Stomach (tissue), 19 donors: ENCODE measurements at regions of chr18 and their contacts with region 1.

Region 1: GRCh38 chr18:7272311-7273049 is 41.6 kb downstream of the LRRC30 start:
- DNase-seq: peak; percentile 60 to 90
- H3K4me3 ChIP-seq: peak overlapping the region; percentile 7 to 30 (median 26)
- H3K27ac ChIP-seq: peak overlapping the region in 4 of 5 donors; percentile 47 to 65 (median 60)
- H3K4me1 ChIP-seq: peaks cover 3 to 19% (median 12%) of the 10 kb centered on the region in 4 donors
- H3K27me3 ChIP-seq: no peaks in the 10 kb centered on the region
- CTCF ChIP-seq: peak in 4 of 7 experiments; percentile 16 to 54 (median 32)
- EP300 ChIP-seq: no peak
- POLR2A ChIP-seq: no peak

Region 2: DNA sequence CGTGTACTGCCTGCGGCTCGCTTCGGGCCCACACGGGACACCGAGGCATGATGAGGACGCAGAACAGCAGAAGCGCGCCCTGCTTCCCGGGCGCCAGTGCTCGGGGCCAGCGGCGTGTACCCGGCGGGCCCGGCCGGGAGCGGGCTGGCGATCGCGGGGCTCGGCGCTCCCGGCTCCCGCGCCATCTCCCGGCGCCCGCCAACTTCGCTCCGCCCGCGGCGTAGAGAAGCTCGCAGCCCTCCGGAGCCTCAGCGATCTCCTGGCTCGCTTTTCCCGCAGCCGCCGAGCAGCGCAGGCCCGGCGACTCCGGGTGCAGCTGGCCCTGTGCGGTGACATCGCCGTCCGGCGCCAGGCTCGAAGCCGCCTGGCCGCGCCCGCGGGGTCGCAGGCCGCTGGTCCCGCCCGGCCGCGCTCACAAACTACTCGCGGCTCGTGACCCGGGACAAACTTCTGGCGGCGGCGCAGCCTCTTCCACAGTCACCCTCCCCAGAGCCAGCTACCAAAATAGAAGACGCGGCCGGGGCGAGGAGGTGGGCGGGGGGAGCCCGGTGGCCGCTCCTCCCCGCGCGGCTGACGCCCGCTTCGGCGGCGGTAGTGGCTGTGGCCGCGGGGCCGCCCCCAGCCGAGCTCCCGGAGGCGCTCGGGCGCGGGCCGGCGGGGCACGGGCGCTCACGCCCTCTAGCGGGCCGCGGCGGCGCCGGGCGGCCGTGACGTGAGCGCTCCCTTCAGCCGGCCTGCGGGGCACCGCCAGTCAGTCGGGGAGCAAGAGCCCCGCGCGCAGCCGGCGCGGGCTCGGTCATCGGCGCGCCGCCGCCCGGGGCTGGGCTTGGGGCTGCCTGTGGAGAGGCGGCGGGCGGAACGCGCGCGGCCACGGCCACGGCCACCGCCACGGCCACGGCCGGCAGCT is 294.3 kb after region 1 on chr18 and contains the start of gene PTPRM:
- intact Hi-C with region 1: loop called (anchors 5 kb)
- DNase-seq: peak; percentile 82 to 94
- H3K4me3 ChIP-seq: peak within 1 kb of the TSS; percentile 87 to 95 (median 88)
- H3K27ac ChIP-seq: peak within 1 kb of the TSS; percentile 95 to 99 (median 96)
- H3K4me1 ChIP-seq: peaks cover 0 to 33% (median 24%) of the 10 kb centered on the region in 4 donors
- H3K27me3 ChIP-seq: peaks cover 0 to 18% (median 0%) of the 10 kb centered on the region in 3 donors
- CTCF ChIP-seq: peak in 1 of 7 experiments; percentile 85
- EP300 ChIP-seq: no peak
- POLR2A ChIP-seq: no peak
- total RNA-seq, gene PTPRM: 55.8 to 246 (median 116) TPM